ENCODE measurements at regions of chr11 and their contacts with region 1.

Region 1: DNA sequence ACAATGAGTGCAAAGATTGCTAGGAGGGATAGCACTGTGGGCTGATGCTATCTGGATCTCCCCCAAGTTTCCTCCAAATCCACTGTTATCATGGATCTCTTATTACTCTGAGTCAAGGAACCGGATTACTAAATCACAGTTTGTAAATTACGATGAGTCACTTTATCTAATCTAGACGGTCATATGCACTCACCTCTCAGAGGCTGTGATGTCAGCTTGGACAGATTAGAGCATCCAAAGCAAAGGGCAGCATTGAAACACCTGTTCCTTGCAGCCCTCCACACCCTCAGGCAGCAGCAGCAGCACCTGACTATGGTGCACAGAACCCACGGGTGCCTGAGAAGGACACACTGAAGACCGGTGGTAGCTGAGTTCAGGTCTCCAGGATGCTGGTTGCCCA is 14.0 kb upstream of the POU2AF1 start:
- DNase-seq: no peak
- CTCF ChIP-seq: no peak

Region 2: GRCh38 chr11:111378861-111379601 is 14.1 kb before region 1 on chr11 and contains the start of gene POU2AF1:
- CTCF ChIA-PET with region 1: interaction called, 13 read pairs
- POLR2A ChIA-PET with region 1: interaction called, 3 read pairs
- DNase-seq: peak; percentile 78
- CTCF ChIP-seq: no peak

Measured in GM10248 (cell line).